Activated CD4-positive, alpha-beta T cell treated with anti-CD3 and anti-CD28 coated beads, Interleukin-2, amount 10 ng/mL, durations not matched to agents 24 days and 14 days (primary cell): ENCODE measurements at regions of chr17 and their contacts with region 1.

Region 1: DNA sequence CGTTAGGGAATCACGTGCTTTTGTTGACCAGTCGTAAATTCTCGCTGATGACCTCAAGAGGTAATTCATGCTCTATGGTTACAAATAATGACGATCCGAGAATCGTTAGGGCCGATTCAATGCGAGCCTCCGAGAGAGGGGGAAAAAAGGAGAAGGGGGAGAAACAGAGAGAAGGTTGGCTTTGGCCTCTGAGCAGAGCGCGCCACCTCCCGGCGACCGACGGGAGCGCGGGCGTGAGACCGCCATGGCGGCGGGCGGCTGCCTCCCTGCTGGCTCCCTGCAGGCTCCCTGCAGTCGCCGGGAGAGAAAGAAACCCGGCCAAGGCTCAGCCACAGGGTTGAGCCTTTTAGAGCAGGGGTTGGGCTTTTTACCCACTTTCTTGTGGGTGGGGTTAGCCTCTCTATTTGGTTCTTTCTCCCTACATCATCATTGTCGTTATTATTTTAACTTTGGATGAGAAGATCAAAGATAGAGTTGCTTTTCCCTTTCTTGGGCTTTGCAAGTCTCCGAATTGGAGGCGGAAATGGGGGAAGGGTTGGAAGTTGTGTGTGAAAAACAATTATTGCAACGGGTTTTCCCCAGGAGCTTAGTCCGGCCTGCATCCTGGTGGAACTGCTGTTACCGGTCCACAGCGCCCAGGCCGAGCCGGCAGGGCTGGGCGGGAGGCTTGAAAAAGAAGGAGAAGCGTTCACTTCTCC is 410 bp upstream of the HOXB5 start:
- DNase-seq: peak; percentile 96
- H3K4me3 Mint-ChIP-seq: peak overlapping the region; percentile 85
- H3K27ac Mint-ChIP-seq: no peak overlapping the region
- H3K4me1 Mint-ChIP-seq: peaks cover 45% of the 10 kb centered on the region
- H3K27me3 Mint-ChIP-seq: peaks cover 87% of the 10 kb centered on the region

Region 2: DNA sequence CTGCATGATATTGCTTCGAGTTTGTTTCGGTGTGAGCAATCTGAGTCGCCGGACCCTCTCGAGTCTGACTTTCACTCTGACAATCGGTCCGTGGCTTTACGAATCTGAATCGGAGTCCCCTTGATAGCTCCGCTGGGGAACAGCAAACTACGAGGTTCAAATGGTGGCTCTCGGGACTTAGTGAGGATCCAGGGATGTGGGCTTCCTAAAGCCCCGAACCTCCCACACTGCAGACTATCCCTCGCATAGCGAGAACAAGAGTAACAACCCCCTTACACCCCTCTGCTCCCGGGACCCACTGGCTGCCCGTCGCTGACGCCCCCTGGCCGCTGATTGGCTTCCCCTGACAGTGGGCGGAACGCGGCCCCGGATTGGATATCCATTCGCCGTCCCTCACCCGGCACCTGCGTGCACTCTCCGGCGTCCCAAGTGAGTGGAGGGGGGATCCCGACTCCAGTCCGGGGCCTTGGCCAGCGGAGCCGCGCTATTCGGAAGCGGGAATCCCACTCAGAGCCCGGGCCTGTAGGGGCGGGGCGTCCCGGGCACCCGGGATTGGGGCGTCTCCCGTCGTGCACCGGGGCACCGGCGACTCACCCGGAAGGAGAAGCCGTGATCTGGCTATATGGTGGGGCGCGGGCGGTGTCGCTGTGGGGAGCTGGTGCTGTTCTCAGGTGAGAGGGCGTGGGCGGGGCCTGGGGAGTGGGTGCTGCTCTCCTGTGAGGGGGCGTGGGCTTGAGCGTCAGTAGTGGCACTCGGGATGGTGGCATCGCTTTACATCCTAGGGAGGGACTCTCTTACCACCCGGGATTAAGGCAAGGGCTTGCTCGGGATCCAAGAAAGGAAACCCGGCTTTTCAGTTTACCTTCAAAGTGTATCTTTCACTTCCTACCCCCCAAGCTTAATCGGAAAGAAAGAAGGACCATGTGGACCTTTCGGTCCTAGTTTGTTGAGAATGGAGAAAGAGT is 486.5 kb before region 1 on chr17 and contains the start of gene SNX11:
- intact Hi-C with region 1: loop called (anchors 10 kb)
- DNase-seq: peak; percentile 98
- H3K4me3 Mint-ChIP-seq: peak within 1 kb of the TSS; percentile 98
- H3K27ac Mint-ChIP-seq: peak within 1 kb of the TSS; percentile 95
- H3K4me1 Mint-ChIP-seq: peaks cover 51% of the 10 kb centered on the region
- H3K27me3 Mint-ChIP-seq: no peaks in the 10 kb centered on the region
- total RNA-seq, gene SNX11: 33.3 and 34.9 TPM in 2 replicates

Region 3: DNA sequence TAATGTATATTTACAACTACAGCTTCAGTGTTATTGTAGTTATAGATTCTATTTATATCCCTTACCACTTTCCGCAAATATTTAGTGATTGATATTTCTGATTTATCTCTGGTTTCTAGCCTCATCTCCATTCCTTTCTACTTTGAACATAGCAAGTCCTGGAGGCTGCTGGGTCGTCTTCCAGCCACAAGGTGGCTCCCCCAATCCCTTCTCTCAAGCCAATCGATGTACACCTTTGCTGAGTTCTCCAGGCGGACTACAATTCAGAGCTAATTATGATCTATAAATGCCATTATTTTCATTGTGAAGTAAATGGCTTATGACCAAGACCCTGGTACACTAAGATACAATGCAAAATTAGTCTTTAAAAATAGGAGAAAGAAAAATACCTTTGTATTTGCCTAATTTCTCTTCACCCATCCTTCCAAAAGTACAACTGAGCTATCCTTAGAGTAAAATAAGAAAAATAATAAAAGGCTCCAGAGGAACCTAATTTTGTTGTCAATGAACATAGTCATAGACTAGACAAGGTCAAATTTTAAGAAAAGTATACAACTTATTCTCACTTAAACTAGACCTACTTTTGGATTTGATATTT is 286.1 kb before region 1 on chr17:
- intact Hi-C with region 1: loop called (anchors 10 kb)
- DNase-seq: peak; percentile 82
- H3K4me3 Mint-ChIP-seq: no peak overlapping the region
- H3K27ac Mint-ChIP-seq: no peak overlapping the region
- H3K4me1 Mint-ChIP-seq: peaks cover 13% of the 10 kb centered on the region
- H3K27me3 Mint-ChIP-seq: no peaks in the 10 kb centered on the region

Region 4: DNA sequence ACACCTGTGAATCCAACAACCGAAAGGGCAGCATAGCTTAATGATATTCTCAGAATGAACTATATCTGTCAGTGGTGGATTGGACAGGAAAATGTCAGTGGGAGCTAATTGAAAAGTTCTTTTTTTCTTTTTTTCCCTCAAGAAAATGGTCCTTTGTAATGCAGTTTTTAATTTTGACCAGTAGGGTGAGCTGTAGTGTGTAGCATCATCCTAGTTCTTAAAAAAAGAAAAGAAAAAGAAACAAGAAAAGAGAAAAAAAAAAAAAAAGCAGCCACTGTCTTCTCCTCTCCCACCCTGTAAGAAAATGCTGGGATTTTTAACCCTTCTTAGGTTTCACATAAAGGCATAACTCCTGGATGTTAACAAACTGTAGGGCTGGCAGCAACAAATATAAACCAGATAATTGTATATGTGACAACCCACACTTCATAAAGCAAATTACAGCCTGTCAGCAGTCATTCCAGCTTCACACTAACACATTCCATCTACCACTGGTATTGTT is 242.1 kb before region 1 on chr17:
- intact Hi-C with region 1: loop called (anchors 2 kb)
- DNase-seq: no peak
- H3K4me3 Mint-ChIP-seq: no peak overlapping the region
- H3K27ac Mint-ChIP-seq: no peak overlapping the region
- H3K4me1 Mint-ChIP-seq: peaks cover 6% of the 10 kb centered on the region
- H3K27me3 Mint-ChIP-seq: no peaks in the 10 kb centered on the region

Region 5: GRCh38 chr17:48610282-48611211 is 16.6 kb after region 1 on chr17 and contains the start of gene HOXB7:
- intact Hi-C with region 1: loop called (anchors 1 kb)
- DNase-seq: peak; percentile 90
- H3K4me3 Mint-ChIP-seq: peak within 1 kb of the TSS; percentile 89
- H3K27ac Mint-ChIP-seq: peak within 1 kb of the TSS; percentile 56
- H3K4me1 Mint-ChIP-seq: peaks cover 32% of the 10 kb centered on the region
- H3K27me3 Mint-ChIP-seq: peaks cover 76% of the 10 kb centered on the region
- total RNA-seq, gene HOXB7: 0.30 and 0.36 TPM in 2 replicates

Region 6: DNA sequence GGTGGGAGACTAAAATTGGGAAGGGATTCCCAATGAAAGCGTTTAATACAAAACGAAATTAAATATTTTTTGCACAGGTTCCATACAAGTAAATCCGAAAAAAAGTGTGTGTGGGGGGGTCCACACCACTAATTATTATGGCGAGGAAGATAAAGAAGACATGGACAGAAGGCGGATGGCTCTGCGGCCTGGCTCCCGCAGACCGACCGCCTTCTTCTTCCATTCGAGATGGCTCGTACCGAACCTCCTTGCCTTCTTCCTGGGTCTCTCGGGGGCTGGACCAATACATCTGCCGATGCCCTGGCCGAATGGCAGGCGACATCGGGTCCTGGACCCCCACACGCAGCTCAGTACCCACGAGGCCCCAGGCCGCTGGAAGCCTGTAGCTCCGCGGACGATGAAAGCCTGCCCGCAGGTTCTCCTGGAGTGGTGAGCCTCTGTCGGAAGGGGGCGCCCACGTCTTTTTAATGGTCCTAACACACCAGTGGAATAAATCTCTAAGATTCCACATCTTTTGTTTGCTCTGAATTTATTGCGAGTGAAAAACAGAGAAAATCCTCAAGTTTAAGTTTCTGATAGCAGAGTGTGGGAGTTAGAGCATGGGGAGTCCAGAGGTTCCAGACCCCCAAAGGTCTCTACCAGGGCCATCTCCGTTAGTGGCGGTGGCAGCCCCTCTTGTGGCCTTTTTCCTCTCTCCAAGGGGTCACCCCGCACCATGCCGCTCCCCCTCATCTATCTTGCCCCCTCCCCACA is 130.4 kb after region 1 on chr17:
- intact Hi-C with region 1: loop called (anchors 5 kb)
- DNase-seq: peak; percentile 92
- H3K4me3 Mint-ChIP-seq: peak overlapping the region; percentile 3
- H3K27ac Mint-ChIP-seq: peak overlapping the region; percentile 74
- H3K4me1 Mint-ChIP-seq: peaks cover 14% of the 10 kb centered on the region
- H3K27me3 Mint-ChIP-seq: peaks cover 94% of the 10 kb centered on the region